A673 (cell line): ENCODE measurements at regions of chr17 and their contacts with region 1.

Region 1: DNA sequence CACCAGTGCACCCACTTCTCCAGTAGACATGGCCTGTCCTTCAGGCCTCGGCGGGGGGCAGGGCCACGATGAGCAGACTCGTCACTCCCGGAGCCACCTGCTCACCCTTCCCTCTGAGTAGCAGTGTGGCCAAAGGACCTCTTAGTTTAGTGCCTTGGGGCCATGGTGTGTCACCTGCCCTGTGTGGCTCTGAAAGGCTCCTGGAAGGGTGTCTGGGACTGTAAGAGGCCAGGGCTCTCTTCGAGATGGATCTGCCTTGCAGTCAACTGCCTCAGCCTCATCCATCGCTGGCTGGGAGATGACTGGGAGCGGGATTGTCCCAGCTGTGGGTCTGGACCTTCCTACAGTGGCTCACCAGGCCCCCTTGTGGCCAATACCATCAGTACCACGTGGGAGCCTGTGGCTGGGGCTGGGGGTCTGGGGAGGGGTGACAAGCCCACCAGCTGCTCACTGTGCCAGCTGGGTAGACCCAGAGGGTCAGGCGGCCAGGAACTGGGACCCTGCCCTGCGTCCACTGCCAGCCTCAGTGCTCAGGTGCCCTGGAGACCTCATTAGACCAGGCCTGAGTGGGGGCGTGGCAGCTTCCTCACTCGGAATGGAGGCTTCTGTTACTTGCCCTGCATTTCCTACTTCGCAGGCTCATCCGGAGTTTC is 133.4 kb downstream of the OR1D5 start:
- DNase-seq: peak; percentile 39
- H3K4me3 ChIP-seq: no peak overlapping the region
- H3K27ac ChIP-seq: no peak overlapping the region
- H3K4me1 ChIP-seq: no peaks in the 10 kb centered on the region
- H3K27me3 ChIP-seq: no peaks in the 10 kb centered on the region
- CTCF ChIP-seq: peak; percentile 67

Region 2: GRCh38 chr17:1878419-1879121 is 1051.4 kb before region 1 on chr17:
- CTCF ChIA-PET with region 1: no interaction called
- POLR2A ChIA-PET with region 1: no interaction called
- intact Hi-C with region 1: no loop called
- DNase-seq: no peak
- H3K4me3 ChIP-seq: no peak overlapping the region
- H3K27ac ChIP-seq: no peak overlapping the region
- H3K4me1 ChIP-seq: no peaks in the 10 kb centered on the region
- H3K27me3 ChIP-seq: no peaks in the 10 kb centered on the region
- CTCF ChIP-seq: no peak

Region 3: GRCh38 chr17:2801841-2802240 is 128.2 kb before region 1 on chr17:
- CTCF ChIA-PET with region 1: no interaction called
- POLR2A ChIA-PET with region 1: no interaction called
- intact Hi-C with region 1: no loop called
- DNase-seq: no peak
- H3K4me3 ChIP-seq: no peak overlapping the region
- H3K27ac ChIP-seq: no peak overlapping the region
- H3K4me1 ChIP-seq: no peaks in the 10 kb centered on the region
- H3K27me3 ChIP-seq: peaks cover 36% of the 10 kb centered on the region
- CTCF ChIP-seq: no peak

Region 4: GRCh38 chr17:2844416-2844815 is 85.6 kb before region 1 on chr17:
- CTCF ChIA-PET with region 1: interaction called, 4 read pairs
- POLR2A ChIA-PET with region 1: no interaction called
- intact Hi-C with region 1: loop called (anchors 2 kb)
- DNase-seq: no peak
- H3K4me3 ChIP-seq: no peak overlapping the region
- H3K27ac ChIP-seq: no peak overlapping the region
- H3K4me1 ChIP-seq: no peaks in the 10 kb centered on the region
- H3K27me3 ChIP-seq: peaks cover 5% of the 10 kb centered on the region
- CTCF ChIP-seq: no peak

Region 5: GRCh38 chr17:2867441-2868424 is 62.3 kb before region 1 on chr17:
- CTCF ChIA-PET with region 1: no interaction called
- POLR2A ChIA-PET with region 1: interaction called, 17 read pairs
- intact Hi-C with region 1: no loop called
- DNase-seq: no peak
- H3K4me3 ChIP-seq: no peak overlapping the region
- H3K27ac ChIP-seq: no peak overlapping the region
- H3K4me1 ChIP-seq: no peaks in the 10 kb centered on the region
- H3K27me3 ChIP-seq: peaks cover 3% of the 10 kb centered on the region
- CTCF ChIP-seq: no peak